ENCODE measurements at regions of chr7 and their contacts with region 1.

Region 1: DNA sequence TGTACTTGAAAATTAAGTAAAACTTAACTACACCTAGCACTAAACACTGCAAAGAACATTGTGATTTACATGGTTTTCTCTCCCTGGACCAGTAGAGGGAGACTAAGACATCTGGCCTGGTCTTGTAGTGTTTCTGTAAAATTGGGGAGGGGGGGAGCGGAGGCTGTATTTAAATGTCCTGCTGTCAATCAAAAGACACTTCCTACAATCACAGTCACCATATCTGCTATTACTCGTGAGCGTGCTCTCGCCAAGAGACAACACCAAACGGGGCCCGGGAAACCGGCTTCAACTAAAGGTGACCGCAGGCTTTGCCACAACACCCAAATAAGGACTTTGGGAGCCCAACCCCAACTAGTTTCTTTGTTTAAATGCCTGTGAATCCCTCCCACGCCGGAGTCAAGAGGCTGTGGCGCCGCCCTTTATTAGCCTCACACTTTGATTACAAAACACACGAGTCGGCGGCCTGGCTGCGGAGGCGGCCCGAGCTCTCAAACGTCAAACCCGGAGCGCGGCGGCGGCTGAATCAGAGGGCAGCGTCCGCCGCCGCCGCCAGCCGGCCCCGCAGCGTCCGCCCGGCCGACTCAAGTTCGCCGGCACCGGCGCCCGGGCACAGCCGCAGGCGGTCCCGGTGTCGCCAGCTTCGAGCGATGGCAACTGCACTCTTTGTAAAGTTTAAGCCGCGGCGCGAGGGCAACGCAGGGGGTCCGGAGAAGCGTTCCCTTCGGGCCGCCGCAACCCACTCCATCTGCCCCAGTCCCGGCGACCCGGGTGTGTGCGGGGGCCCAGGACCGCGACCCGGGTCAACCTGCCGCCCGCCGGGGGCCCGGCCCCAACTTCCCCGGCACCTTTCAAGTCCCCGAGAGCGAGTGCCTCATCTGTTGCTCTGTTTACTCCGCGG is 1.3 kb downstream of the KDM7A start:
- DNase-seq: peak; percentile 95
- H3K4me3 Mint-ChIP-seq: peak overlapping the region; percentile 80
- H3K27ac Mint-ChIP-seq: peak overlapping the region; percentile 91
- H3K4me1 Mint-ChIP-seq: peaks cover 52% of the 10 kb centered on the region
- H3K27me3 Mint-ChIP-seq: no peaks in the 10 kb centered on the region

Region 2: GRCh38 chr7:139359366-139360209 is 815.9 kb before region 1 on chr7 and contains the start of gene LUC7L2:
- CTCF ChIA-PET with region 1: no interaction called
- POLR2A ChIA-PET with region 1: no interaction called
- intact Hi-C with region 1: loop called (anchors 5 kb)
- DNase-seq: peak; percentile 100
- H3K4me3 Mint-ChIP-seq: peak within 1 kb of the TSS; percentile 97
- H3K27ac Mint-ChIP-seq: peak within 1 kb of the TSS; percentile 99
- H3K4me1 Mint-ChIP-seq: peaks cover 40% of the 10 kb centered on the region
- H3K27me3 Mint-ChIP-seq: no peaks in the 10 kb centered on the region
- total RNA-seq, gene LUC7L2: 105 to 114 TPM

Region 3: GRCh38 chr7:139753081-139753692 is 422.3 kb before region 1 on chr7:
- CTCF ChIA-PET with region 1: no interaction called
- POLR2A ChIA-PET with region 1: no interaction called
- intact Hi-C with region 1: no loop called
- DNase-seq: no peak
- H3K4me3 Mint-ChIP-seq: no peak overlapping the region
- H3K27ac Mint-ChIP-seq: no peak overlapping the region
- H3K4me1 Mint-ChIP-seq: peaks cover 35% of the 10 kb centered on the region
- H3K27me3 Mint-ChIP-seq: no peaks in the 10 kb centered on the region

Region 4: DNA sequence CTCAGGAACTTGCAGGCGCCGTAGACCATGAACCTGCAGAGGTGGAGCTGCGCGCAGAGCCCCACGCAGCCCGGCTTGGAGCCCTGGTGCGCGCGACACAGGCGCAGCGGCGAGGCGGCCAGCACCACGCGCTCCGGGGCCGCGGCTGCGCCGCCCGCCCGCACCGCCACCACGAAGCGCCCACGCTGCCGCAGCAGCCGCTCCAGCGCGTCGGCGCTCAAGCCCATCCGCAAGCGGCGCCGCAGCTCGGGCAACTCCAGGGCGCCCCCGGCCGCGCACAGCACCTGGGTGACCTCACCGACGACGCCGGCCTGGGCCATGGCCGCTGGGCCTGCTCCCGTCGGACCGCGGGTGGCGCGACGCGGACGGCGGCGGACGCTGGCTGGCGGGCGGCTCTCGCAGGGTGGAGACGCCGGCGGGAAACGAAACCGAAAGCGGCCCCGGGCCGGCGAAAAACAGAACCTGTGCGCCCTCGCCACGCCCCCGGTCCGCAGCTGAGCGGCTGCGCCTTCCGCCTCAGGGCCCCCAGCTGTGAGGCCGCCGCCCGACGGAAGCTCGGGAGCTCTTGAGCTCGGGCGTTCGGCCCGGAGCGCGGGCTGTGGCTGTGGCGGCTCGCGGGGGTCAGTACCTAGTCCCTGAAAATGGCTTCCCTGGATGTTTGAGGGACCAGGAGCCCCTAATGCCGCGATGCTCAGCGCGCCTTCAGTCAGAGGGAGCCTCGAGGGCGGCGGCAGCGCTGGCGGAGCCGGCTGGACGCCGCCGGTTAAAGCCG is 112.8 kb before region 1 on chr7 and contains the start of gene PARP12:
- CTCF ChIA-PET with region 1: interaction called, 3 read pairs
- POLR2A ChIA-PET with region 1: interaction called, 6 read pairs
- intact Hi-C with region 1: loop called (anchors 2 kb)
- DNase-seq: peak; percentile 89
- H3K4me3 Mint-ChIP-seq: peak within 1 kb of the TSS; percentile 80
- H3K27ac Mint-ChIP-seq: peak within 1 kb of the TSS; percentile 42
- H3K4me1 Mint-ChIP-seq: peaks cover 34% of the 10 kb centered on the region
- H3K27me3 Mint-ChIP-seq: no peaks in the 10 kb centered on the region
- total RNA-seq, gene PARP12: 26.7 to 30.6 TPM

Region 5: DNA sequence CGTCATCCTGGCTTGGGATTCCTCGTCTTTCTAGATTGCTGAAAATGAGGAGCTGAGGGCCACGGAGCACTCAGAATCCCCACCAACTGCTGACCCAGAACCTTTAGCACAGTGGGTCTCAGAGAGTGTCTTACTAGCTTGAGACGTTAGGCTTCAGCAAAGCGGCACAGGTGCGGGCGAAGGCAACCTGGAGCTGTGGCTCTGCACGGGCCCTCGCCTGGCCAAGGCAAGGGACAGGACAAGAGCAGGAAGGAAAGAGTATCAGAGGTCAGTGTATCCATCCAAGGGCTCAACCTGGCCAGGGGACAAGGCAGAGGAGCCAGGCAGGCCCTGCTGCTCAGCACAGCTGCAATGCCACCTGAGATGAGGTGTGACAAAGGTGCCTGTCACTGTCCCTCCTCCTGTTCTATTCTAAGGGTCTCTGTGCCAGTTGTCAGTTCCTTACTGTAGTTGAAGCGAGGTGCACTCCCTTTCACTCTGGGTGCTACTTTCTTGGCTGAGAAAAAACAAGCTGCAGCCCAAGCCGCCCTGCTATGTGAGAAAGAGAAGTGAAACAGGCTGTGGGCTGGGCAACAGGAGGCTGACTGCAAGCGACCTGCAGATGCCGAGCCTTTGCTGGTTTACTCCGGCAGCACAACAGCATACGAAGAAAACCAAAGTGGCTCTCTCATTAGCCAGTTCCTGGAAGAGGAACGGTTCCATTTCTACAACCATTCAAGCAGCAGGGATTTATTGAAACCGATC is 34.6 kb after region 1 on chr7:
- CTCF ChIA-PET with region 1: interaction called, 6 read pairs
- POLR2A ChIA-PET with region 1: interaction called, 30 read pairs
- intact Hi-C with region 1: loop called (anchors 1 kb)
- DNase-seq: peak; percentile 87
- H3K4me3 Mint-ChIP-seq: peak overlapping the region; percentile 38
- H3K27ac Mint-ChIP-seq: peak overlapping the region; percentile 86
- H3K4me1 Mint-ChIP-seq: peaks cover 86% of the 10 kb centered on the region
- H3K27me3 Mint-ChIP-seq: no peaks in the 10 kb centered on the region

Region 6: DNA sequence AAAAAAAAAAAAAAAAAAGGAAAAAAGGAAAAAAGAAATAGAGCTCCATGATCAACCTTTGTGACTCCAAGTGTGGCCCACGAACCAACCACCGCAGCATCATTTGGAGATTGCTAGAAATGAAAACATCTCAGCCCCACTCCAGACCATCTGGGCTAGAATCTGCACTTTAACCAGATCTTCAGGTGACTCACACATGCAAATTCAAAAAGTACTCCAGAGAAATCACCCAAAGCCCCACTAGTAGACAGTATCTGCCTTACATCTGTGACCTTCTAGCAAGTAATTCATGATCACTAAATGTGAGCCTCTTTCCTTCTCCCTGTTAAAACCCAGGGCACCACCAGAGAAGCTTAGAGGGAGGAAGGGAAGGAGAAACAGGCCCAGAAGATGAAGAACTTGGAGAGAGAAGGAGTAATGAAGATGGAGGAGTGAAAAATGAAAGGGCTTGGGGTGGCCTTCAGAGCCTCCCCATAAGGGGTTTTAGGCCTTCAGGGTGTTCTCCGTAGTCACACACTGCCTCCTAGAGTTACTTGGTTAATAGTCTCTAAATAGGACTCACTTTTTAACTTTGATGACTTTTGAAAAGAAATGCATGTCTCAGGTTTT is 128.8 kb after region 1 on chr7:
- CTCF ChIA-PET with region 1: interaction called, 9 read pairs
- POLR2A ChIA-PET with region 1: no interaction called
- intact Hi-C with region 1: loop called (anchors 1 kb)
- DNase-seq: peak; percentile 62
- H3K4me3 Mint-ChIP-seq: no peak overlapping the region
- H3K27ac Mint-ChIP-seq: peak overlapping the region; percentile 88
- H3K4me1 Mint-ChIP-seq: peaks cover 16% of the 10 kb centered on the region
- H3K27me3 Mint-ChIP-seq: no peaks in the 10 kb centered on the region

Region 7: GRCh38 chr7:140403878-140404564 is 228.6 kb after region 1 on chr7 and contains the start of gene RAB19:
- CTCF ChIA-PET with region 1: no interaction called
- POLR2A ChIA-PET with region 1: no interaction called
- intact Hi-C with region 1: loop called (anchors 5 kb)
- DNase-seq: peak; percentile 61
- H3K4me3 Mint-ChIP-seq: peak within 1 kb of the TSS; percentile 87
- H3K27ac Mint-ChIP-seq: peak within 1 kb of the TSS; percentile 92
- H3K4me1 Mint-ChIP-seq: peaks cover 33% of the 10 kb centered on the region
- H3K27me3 Mint-ChIP-seq: no peaks in the 10 kb centered on the region
- total RNA-seq, gene RAB19: 13.3 to 14.5 TPM

Region 8: GRCh38 chr7:140696680-140697446 is 521.4 kb after region 1 on chr7 and contains the start of gene NDUFB2:
- CTCF ChIA-PET with region 1: no interaction called
- POLR2A ChIA-PET with region 1: no interaction called
- intact Hi-C with region 1: loop called (anchors 1 kb)
- DNase-seq: peak; percentile 80
- H3K4me3 Mint-ChIP-seq: peak within 1 kb of the TSS; percentile 95
- H3K27ac Mint-ChIP-seq: peak within 1 kb of the TSS; percentile 97
- H3K4me1 Mint-ChIP-seq: peaks cover 32% of the 10 kb centered on the region
- H3K27me3 Mint-ChIP-seq: no peaks in the 10 kb centered on the region
- total RNA-seq, gene NDUFB2: 171 to 183 TPM